AG04449 (cell line): ENCODE measurements at regions of chr2 and their contacts with region 1.

Region 1: DNA sequence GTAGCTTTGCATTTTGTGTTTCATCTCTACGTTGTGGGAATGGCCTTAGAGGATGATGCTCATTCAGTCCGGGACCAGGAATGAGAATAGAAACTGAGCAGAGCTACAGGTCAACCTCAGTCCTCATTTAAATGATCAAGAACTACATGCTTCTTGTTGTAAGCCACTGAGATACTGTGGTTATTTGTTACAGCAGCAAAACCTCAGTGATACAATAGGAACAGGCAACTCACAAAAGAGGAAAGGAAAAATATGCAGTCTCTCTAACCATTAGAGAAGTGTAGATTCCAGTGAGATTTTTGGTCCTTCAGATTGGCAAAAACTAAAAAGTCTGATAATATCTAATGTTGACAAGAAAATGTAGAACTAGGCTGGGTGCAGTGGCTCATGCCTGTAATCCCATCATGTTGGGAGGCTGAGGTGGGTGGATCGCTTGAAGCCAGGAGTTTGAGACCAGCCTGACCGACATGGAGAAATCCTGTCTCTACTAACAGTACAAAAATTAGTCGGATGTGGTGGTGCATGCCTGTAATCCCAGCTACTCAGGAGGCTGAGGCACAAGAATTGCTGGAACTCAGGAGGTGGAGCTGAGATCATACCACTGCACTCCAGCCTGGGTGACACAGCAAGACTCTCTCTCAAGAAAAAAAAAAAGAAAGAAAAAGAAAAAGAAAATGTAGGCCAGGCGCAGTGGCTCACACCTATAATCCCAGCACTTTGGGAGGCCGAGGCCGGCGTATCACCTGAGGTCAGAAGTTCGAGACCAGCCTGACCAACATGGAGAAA is 13.3 kb downstream of the CHCHD5 start:
- DNase-seq: no peak
- H3K4me3 ChIP-seq: no peak overlapping the region
- CTCF ChIP-seq: no peak

Region 2: GRCh38 chr2:112474844-112475486 is 122.8 kb before region 1 on chr2:
- CTCF ChIA-PET with region 1: no interaction called
- POLR2A ChIA-PET with region 1: no interaction called
- DNase-seq: no peak
- H3K4me3 ChIP-seq: no peak overlapping the region
- CTCF ChIP-seq: no peak

Region 3: DNA sequence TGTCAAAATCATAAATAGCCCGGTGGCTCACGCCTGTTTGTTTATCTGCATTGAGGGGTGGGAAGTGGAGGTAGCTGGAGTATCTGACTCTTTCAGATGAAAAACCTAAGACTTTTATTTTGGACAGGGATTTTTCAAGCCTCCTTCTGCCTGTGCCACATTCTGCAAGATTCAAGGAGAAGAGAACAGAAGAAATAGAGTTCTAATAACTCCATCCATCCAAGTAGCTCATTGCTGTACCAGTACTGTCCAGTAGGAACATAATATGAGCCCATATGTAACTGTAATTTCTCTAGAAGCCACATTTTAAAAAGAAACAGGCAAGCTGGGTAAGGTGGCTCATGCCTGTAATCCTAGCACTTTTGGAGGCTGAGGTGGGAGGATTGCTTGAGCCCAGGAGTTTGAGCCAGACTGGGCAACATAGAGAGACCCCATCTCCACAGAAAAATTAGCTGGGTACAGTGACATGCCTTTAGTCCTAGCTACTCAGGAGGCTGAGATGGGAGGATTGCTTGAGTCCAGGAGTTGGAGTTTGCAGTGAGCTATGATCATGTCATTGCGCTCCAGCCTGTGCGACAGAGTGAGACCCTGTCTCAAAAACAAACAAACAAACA is 87.6 kb after region 1 on chr2:
- CTCF ChIA-PET with region 1: interaction called, 34 read pairs
- POLR2A ChIA-PET with region 1: no interaction called
- DNase-seq: no peak
- H3K4me3 ChIP-seq: no peak overlapping the region
- CTCF ChIP-seq: no peak